ENCODE measurements at regions of chr1 and their contacts with region 1.

Region 1: GRCh38 chr1:18178111-18178510 is 70.5 kb downstream of the IGSF21 start:
- DNase-seq: no peak
- ATAC-seq: no peak
- H3K4me3 ChIP-seq: no peak overlapping the region
- H3K27ac ChIP-seq: no peak overlapping the region
- H3K4me1 ChIP-seq: peaks cover 0 to 6% (median 0%) of the 10 kb centered on the region in 9 donors
- H3K27me3 ChIP-seq: peaks cover 0 to 75% (median 59%) of the 10 kb centered on the region in 7 donors
- CTCF ChIP-seq: no peak

Region 2: GRCh38 chr1:18100491-18101063 is 77.5 kb before region 1 on chr1:
- intact Hi-C with region 1: no loop called
- DNase-seq: peak; percentile 32 to 48
- ATAC-seq: peak in 5 of 8 donors; percentile 42 to 73 (median 55)
- H3K4me3 ChIP-seq: no peak overlapping the region
- H3K27ac ChIP-seq: no peak overlapping the region
- H3K4me1 ChIP-seq: no peaks in the 10 kb centered on the region
- H3K27me3 ChIP-seq: peaks cover 0 to 71% (median 36%) of the 10 kb centered on the region in 7 donors
- CTCF ChIP-seq: peak; percentile 47 to 82 (median 73)

Region 3: DNA sequence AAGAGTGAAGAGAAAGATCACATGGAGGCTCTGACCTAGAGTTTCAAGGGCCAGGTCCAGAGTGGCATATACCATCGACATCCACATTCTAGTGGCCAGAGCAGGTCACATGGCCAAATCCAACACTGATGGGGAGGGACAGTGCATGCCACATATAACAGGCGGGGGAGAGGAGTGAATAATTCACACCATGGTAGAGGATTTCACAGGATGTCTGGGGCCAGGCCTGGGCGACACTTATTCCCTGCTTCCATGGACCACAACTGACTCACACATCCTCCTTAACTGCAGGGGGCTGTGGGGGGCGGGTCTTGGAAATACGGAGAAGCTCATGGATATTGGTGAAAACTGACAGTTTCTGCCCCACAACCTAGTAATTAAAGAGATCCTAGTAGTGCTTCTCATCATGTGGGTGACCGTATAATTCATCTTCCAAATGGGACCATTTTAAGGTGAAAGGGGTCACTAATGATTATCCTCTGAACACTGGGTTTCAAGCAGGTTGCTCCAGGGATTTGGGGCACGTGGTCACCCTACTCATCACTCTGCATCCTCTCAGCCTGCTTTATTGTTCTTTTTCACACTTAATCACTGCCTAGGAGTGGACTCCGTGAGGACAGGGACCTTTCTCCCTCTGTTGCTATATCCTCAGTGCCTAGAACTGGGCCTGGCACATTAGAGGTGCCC is 26.5 kb before region 1 on chr1:
- intact Hi-C with region 1: loop called in 1 of 10 experiments (anchors 2 kb)
- DNase-seq: no peak
- ATAC-seq: no peak
- H3K4me3 ChIP-seq: no peak overlapping the region
- H3K27ac ChIP-seq: no peak overlapping the region
- H3K4me1 ChIP-seq: no peaks in the 10 kb centered on the region
- H3K27me3 ChIP-seq: peaks cover 0 to 43% (median 11%) of the 10 kb centered on the region in 7 donors
- CTCF ChIP-seq: no peak

Measured in heart right ventricle (tissue), 16 donors.